ENCODE measurements at regions of chr6 and their contacts with region 1.

Region 1: DNA sequence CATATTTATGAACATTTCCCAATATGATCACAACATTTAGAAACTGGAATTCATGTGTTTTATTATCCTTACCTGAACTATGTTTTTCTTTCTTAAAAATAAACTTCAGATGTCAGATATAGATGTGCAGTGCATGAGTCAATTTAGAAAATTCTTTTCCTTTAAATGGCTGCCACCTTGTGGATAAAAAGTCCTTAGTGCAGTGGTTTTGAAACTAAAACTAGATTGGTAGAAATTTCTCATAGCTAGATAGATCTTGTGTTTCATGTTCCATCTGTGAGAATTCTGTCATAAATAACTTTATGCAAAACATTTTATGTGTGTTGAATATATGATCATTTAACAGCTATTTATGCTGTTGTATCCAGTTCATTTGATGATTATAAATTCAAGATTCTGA is 134.9 kb downstream of the KLHL32 start:
- DNase-seq: peak; percentile 17
- ATAC-seq: peak; percentile 62; the same call in 2 of the 3 replicates
- H3K4me3 ChIP-seq: no peak overlapping the region
- H3K27ac ChIP-seq: no peak overlapping the region
- H3K4me1 ChIP-seq: no peaks in the 10 kb centered on the region
- H3K27me3 ChIP-seq: peaks cover 0 to 2% of the 10 kb centered on the region in 2 experiments; a peak in 1 of 5 replicates
- CTCF ChIP-seq: peak; percentile 54
- EP300 ChIP-seq: no peak
- POLR2A ChIP-seq: no peak
- RAD21 ChIP-seq: no peak

Region 2: DNA sequence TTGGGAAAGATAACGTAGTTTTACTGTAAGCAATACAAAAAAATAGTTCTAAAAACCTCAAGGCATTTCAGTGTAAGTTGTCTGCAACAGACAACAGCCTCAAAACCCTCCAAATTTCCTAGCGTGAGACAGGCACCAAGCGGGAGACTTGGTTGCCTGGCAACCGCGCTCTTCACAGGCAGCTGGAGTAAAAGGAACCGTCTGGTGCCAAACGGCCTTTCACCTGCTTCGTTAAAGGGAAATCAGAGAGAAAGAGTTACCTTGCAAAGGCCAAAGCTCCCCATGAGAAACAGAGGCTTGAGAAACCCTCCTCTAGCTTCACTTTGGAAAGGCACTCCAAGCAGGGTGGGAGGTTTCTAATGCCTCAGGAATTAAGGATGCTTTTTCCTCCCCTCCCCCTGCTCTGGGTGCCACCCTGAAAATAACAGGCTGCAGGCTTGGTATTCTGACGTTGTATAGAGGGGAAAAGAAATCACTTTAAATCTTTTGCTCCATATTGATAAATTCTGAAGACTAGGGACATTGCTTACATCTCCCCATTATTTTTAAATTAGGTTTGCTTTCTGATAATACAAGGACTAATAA is 667.6 kb before region 1 on chr6:
- CTCF ChIA-PET with region 1: no interaction called
- POLR2A ChIA-PET with region 1: no interaction called
- in situ Hi-C with region 1: no loop called
- intact Hi-C with region 1: loop called (anchors 10 kb)
- DNase-seq: no peak
- ATAC-seq: no peak
- H3K4me3 ChIP-seq: no peak overlapping the region
- H3K27ac ChIP-seq: no peak overlapping the region
- H3K4me1 ChIP-seq: no peaks in the 10 kb centered on the region
- H3K27me3 ChIP-seq: no peaks in the 10 kb centered on the region
- CTCF ChIP-seq: no peak
- EP300 ChIP-seq: no peak
- POLR2A ChIP-seq: no peak
- RAD21 ChIP-seq: no peak

Region 3: DNA sequence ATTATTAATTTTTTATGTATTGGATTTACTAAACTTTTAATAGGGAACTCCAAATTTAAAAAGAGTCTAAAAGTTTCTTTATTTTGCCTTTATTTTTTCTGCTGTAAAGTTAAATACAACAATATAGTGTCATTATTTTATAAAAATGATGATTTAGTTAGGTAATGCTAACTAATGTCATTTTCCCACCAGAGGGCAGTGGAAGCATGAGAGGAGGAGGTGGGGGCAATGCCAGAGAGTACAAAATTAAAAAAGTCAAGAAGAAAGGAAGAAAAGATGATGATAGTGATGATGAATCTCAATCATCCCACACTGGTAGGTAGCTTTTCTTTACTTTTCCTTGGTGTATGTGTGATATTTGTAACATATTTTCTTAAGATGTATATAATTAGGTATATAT is 516.8 kb before region 1 on chr6:
- CTCF ChIA-PET with region 1: no interaction called
- POLR2A ChIA-PET with region 1: no interaction called
- in situ Hi-C with region 1: no loop called
- intact Hi-C with region 1: loop called (anchors 5 kb)
- DNase-seq: no peak
- ATAC-seq: no peak
- H3K4me3 ChIP-seq: no peak overlapping the region
- H3K27ac ChIP-seq: no peak overlapping the region
- H3K4me1 ChIP-seq: no peaks in the 10 kb centered on the region
- H3K27me3 ChIP-seq: no peaks in the 10 kb centered on the region
- CTCF ChIP-seq: no peak
- EP300 ChIP-seq: no peak
- POLR2A ChIP-seq: no peak
- RAD21 ChIP-seq: no peak

Region 4: GRCh38 chr6:96626759-96627364 is 432.6 kb before region 1 on chr6:
- CTCF ChIA-PET with region 1: interaction called, 14 read pairs
- POLR2A ChIA-PET with region 1: no interaction called
- in situ Hi-C with region 1: loop called (anchors 5 kb)
- intact Hi-C with region 1: loop called (anchors 1 kb)
- DNase-seq: peak; percentile 21
- ATAC-seq: peak; percentile 82
- H3K4me3 ChIP-seq: no peak overlapping the region
- H3K27ac ChIP-seq: no peak overlapping the region
- H3K4me1 ChIP-seq: no peaks in the 10 kb centered on the region
- H3K27me3 ChIP-seq: no peaks in the 10 kb centered on the region
- CTCF ChIP-seq: peak; percentile 40
- EP300 ChIP-seq: no peak
- POLR2A ChIP-seq: no peak
- RAD21 ChIP-seq: 0 out of 2 replicates have a peak, but pooled peaks have one; percentile 29

Region 5: GRCh38 chr6:97110626-97111025 is 51.2 kb after region 1 on chr6:
- CTCF ChIA-PET with region 1: no interaction called
- POLR2A ChIA-PET with region 1: no interaction called
- in situ Hi-C with region 1: no loop called
- intact Hi-C with region 1: no loop called
- DNase-seq: no peak
- ATAC-seq: no peak
- H3K4me3 ChIP-seq: no peak overlapping the region
- H3K27ac ChIP-seq: no peak overlapping the region
- H3K4me1 ChIP-seq: no peaks in the 10 kb centered on the region
- H3K27me3 ChIP-seq: no peaks in the 10 kb centered on the region; a peak in 1 of 5 replicates
- CTCF ChIP-seq: no peak
- EP300 ChIP-seq: no peak
- POLR2A ChIP-seq: no peak
- RAD21 ChIP-seq: no peak

Region 6: GRCh38 chr6:97288176-97288575 is 228.7 kb after region 1 on chr6:
- CTCF ChIA-PET with region 1: no interaction called
- POLR2A ChIA-PET with region 1: no interaction called
- in situ Hi-C with region 1: no loop called
- intact Hi-C with region 1: loop called (anchors 5 kb)
- DNase-seq: peak; percentile 27
- ATAC-seq: no peak; the same call in 2 of the 3 replicates
- H3K4me3 ChIP-seq: no peak overlapping the region
- H3K27ac ChIP-seq: no peak overlapping the region
- H3K4me1 ChIP-seq: peaks cover 9% of the 10 kb centered on the region
- H3K27me3 ChIP-seq: peaks cover 0 to 9% of the 10 kb centered on the region in 2 experiments; a peak in 3 of 5 replicates
- CTCF ChIP-seq: no peak
- EP300 ChIP-seq: no peak
- POLR2A ChIP-seq: no peak
- RAD21 ChIP-seq: no peak

Measured in HepG2 (cell line).